ENCODE measurements at regions of chr1 and their contacts with region 1.

Region 1: GRCh38 chr1:84506002-84506728 is at the starts of genes GNG5 and SPATA1:
- DNase-seq: peak; percentile 90
- ATAC-seq: peak; percentile 90
- H3K4me3 ChIP-seq: peak within 1 kb of the TSS; percentile 92 to 97 (median 97)
- H3K27ac ChIP-seq: peak within 1 kb of the TSS; percentile 99
- H3K4me1 ChIP-seq: peaks cover 53% of the 10 kb centered on the region
- H3K27me3 ChIP-seq: no peaks in the 10 kb centered on the region
- CTCF ChIP-seq: no peak
- EP300 ChIP-seq: peak in 1 of 2 experiments; percentile 15; a peak in 1 of 4 replicates
- POLR2A ChIP-seq: peak; percentile 65 to 90
- RAD21 ChIP-seq: peak; percentile 33; the same call in 1 of the 2 replicates
- total RNA-seq, gene GNG5: 137 and 176 TPM in 2 replicates
- total RNA-seq, gene SPATA1: 1.1 and 1.4 TPM in 2 replicates

Region 2: GRCh38 chr1:84425150-84425896 is 80.8 kb before region 1 on chr1:
- CTCF ChIA-PET with region 1: no interaction called
- POLR2A ChIA-PET with region 1: no interaction called
- in situ Hi-C with region 1: no loop called
- intact Hi-C with region 1: no loop called
- DNase-seq: no peak
- ATAC-seq: no peak
- H3K4me3 ChIP-seq: no peak overlapping the region
- H3K27ac ChIP-seq: no peak overlapping the region
- H3K4me1 ChIP-seq: no peaks in the 10 kb centered on the region
- H3K27me3 ChIP-seq: no peaks in the 10 kb centered on the region; a peak in 1 of 5 replicates
- CTCF ChIP-seq: no peak
- EP300 ChIP-seq: no peak
- POLR2A ChIP-seq: no peak
- RAD21 ChIP-seq: no peak

Region 3: DNA sequence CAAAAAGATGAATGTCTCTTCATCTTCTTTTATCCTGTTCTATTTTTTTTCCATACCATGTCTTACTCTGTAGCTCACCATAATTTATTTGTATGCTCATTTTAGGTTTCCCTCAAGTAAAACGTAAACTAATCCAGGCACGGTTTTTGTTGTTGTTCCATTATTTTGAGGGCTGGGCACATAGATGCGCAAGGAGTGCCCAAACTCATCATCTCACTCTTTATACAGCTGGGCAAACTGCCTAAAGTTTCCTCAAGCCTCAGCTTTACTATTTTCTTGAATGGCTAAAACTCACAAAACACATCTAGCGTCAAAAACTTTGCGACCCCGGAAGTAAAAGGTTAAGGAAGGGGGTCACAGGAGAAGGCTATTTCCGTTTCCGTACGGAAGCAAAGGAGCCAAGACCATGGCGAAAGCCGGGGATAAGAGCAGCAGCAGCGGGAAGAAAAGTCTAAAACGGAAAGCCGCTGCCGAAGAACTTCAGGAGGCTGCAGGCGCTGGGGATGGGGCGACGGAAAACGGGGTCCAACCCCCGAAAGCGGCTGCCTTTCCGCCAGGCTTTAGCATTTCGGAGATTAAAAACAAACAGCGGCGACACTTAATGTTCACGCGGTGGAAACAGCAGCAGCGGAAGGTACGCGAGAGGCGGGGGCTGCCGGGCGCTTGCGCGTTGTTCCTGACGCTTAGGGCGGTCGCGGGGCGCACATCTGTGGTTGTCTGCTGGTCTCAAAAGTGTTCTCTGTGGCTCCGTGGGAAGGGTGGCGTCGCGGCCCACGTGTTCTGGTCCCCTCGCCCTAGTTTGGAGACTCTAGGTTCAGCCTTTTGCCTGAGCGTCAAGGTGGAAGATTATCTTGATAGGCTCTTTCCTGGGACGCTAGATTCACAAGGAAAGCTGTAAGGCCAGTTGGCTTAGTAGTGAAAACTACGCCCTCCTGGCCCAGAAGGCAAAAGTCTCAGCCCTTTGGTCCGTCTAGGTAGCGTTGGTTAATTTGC is 27.0 kb before region 1 on chr1 and contains the start of gene RPF1:
- CTCF ChIA-PET with region 1: no interaction called
- POLR2A ChIA-PET with region 1: interaction called, 22 read pairs
- in situ Hi-C with region 1: no loop called
- intact Hi-C with region 1: no loop called
- DNase-seq: peak; percentile 82
- ATAC-seq: peak; percentile 99
- H3K4me3 ChIP-seq: peak within 1 kb of the TSS; percentile 82 to 94 (median 93)
- H3K27ac ChIP-seq: peak within 1 kb of the TSS; percentile 86
- H3K4me1 ChIP-seq: peaks cover 20% of the 10 kb centered on the region
- H3K27me3 ChIP-seq: no peaks in the 10 kb centered on the region; a peak in 1 of 5 replicates
- CTCF ChIP-seq: no peak
- EP300 ChIP-seq: peak in 1 of 2 experiments; percentile 8; a peak in 1 of 4 replicates
- POLR2A ChIP-seq: peak; percentile 58 to 84
- RAD21 ChIP-seq: peak; percentile 42; the same call in 1 of the 2 replicates
- total RNA-seq, gene RPF1: 39.0 and 58.4 TPM in 2 replicates

Region 4: DNA sequence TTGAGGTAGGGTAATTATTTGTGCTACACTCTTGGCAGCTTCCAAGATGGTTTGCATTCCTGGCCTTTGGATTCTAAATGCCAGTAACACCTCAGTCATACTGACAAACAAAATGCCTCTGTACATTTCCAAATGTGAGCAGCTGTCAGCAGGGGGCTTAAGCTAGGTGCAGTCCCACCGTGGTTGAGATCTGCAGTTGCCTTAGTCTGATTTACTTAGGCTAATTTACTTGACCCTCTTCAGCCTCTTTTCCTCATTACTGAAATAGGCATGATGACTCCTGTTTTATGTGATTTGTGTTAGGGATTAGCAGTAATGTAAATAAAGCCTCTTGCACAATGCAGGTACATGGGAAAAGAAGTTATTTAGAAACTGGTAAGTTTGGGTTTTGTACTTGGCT is 13.4 kb before region 1 on chr1:
- CTCF ChIA-PET with region 1: no interaction called
- POLR2A ChIA-PET with region 1: interaction called, 17 read pairs
- in situ Hi-C with region 1: no loop called
- intact Hi-C with region 1: loop called (anchors 2 kb)
- DNase-seq: peak; percentile 30
- ATAC-seq: peak; percentile 78
- H3K4me3 ChIP-seq: no peak overlapping the region
- H3K27ac ChIP-seq: no peak overlapping the region
- H3K4me1 ChIP-seq: peaks cover 17% of the 10 kb centered on the region
- H3K27me3 ChIP-seq: no peaks in the 10 kb centered on the region
- CTCF ChIP-seq: no peak; the same call in 1 of the 2 replicates
- EP300 ChIP-seq: no peak
- POLR2A ChIP-seq: no peak
- RAD21 ChIP-seq: no peak

Region 5: DNA sequence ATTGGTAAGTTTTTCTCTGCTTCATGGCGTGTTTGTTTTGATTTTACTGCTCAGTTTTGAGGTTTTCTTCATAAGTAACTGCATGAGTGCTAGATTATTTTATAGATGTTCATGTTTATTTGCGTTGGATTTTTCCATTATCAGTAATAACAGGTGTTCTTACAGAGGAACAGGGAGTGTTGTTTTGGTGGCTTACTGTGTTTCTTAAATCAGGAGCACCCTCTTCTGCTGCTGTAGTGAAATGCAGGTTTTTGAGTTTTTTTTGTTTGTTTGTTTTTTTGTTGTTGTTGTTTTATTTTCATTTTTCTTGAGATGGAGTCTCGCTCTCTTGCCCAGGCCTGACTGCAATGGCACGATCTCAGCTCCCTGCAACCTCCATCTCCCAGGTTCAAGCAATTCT is 35.5 kb after region 1 on chr1:
- CTCF ChIA-PET with region 1: no interaction called
- POLR2A ChIA-PET with region 1: no interaction called
- in situ Hi-C with region 1: no loop called
- intact Hi-C with region 1: loop called (anchors 5 kb)
- DNase-seq: no peak
- ATAC-seq: no peak
- H3K4me3 ChIP-seq: no peak overlapping the region
- H3K27ac ChIP-seq: no peak overlapping the region
- H3K4me1 ChIP-seq: no peaks in the 10 kb centered on the region
- H3K27me3 ChIP-seq: no peaks in the 10 kb centered on the region
- CTCF ChIP-seq: peak; percentile 50
- EP300 ChIP-seq: no peak
- POLR2A ChIP-seq: no peak
- RAD21 ChIP-seq: no peak

Region 6: GRCh38 chr1:84573967-84574842 is 68.0 kb after region 1 on chr1 and contains the start of gene CTBS:
- CTCF ChIA-PET with region 1: no interaction called
- POLR2A ChIA-PET with region 1: interaction called, 90 read pairs
- in situ Hi-C with region 1: loop called (anchors 5 kb)
- intact Hi-C with region 1: loop called (anchors 2 kb)
- DNase-seq: peak; percentile 71
- ATAC-seq: peak; percentile 98
- H3K4me3 ChIP-seq: peak within 1 kb of the TSS; percentile 72 to 80 (median 78)
- H3K27ac ChIP-seq: peak within 1 kb of the TSS; percentile 94
- H3K4me1 ChIP-seq: peaks cover 21% of the 10 kb centered on the region
- H3K27me3 ChIP-seq: no peaks in the 10 kb centered on the region; a peak in 1 of 5 replicates
- CTCF ChIP-seq: peak; percentile 22; the same call in 1 of the 2 replicates
- EP300 ChIP-seq: no peak
- POLR2A ChIP-seq: peak; percentile 78 to 91
- RAD21 ChIP-seq: no peak
- total RNA-seq, gene CTBS: 4.2 and 4.7 TPM in 2 replicates

Region 7: DNA sequence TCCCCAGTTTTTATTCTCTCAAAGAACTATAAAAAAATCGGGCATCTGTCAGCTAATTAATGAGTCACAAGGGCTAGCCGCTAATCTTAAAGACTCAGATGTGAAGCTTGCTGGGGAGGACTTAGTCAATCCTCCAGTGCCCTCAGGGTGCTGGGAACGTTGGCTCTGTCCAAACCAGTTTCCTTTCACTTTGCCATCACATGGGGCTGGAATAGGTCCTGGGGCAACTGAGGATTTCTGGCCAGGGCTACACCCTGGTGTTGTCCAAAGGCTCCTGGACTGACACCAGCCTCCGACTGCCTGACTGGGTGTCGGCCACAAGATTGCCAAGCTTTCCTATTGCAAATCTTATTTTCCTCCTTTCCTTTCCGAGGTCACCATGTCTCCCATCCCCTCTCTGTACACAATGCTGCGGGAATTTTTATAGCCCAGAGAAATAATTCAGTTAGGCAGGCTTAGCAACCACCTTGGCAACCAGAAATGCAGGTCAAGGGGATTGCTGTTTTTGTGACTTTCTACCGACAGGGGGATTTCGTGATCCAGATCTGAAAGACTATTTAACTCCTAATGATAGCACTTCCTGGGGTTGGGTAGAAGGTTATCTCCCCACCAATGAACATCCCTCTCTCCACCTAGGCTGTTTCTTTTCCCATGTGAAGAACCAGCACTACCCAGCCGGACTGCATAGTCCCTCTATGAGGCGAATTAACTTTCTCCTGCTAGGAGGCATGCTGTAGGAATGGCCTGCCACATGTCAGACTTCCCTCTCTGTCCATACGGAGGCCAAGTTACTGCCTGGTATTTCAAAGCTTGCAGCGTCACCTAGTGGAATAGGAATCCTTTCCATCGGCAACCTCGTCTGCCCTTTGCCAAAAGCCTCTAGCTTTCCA is 98.0 kb after region 1 on chr1:
- CTCF ChIA-PET with region 1: no interaction called
- POLR2A ChIA-PET with region 1: no interaction called
- in situ Hi-C with region 1: no loop called
- intact Hi-C with region 1: loop called (anchors 1 kb)
- DNase-seq: peak; percentile 85
- ATAC-seq: peak; percentile 97
- H3K4me3 ChIP-seq: peak overlapping the region; percentile 5 to 59 (median 45); a peak in 4 of 6 replicates
- H3K27ac ChIP-seq: no peak overlapping the region
- H3K4me1 ChIP-seq: peaks cover 17% of the 10 kb centered on the region; the same call in 1 of the 2 replicates
- H3K27me3 ChIP-seq: peaks cover 0 to 6% of the 10 kb centered on the region in 2 experiments; a peak in 3 of 5 replicates
- CTCF ChIP-seq: peak; percentile 93
- EP300 ChIP-seq: no peak
- POLR2A ChIP-seq: no peak
- RAD21 ChIP-seq: peak; percentile 89